ENCODE measurements at regions of chr11 and their contacts with region 1.

Region 1: DNA sequence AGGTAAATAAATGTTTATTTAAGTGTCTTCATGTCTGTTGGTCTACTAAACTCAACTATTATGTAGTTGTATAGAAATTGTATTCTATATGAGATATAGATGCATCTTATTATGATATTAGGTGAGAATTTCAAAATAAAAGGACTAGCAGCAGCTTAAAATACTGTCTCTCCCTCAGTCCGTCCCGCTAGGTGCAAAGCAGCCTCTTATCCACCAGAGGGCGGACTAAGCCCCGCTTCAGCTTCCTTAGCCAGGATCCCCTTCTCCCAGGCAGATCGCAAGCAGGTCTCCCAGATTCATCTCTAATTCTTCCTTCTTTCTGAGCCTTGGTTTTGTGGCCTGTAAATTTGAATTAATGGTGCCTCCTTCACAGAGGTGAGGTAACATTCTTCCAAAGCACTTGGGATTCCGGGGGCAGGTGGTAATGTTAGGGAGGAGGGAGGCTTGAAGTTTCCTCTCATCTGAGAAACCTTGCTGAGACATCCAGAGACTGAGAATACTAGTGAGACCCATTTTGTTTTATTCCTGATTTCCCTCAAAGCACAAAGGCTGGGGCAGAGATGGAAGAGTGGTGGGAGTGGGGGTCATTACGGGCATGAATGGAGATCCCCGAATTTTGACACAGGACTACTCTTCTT is 13.5 kb upstream of the INSC start:
- DNase-seq: peak; percentile 73
- H3K4me3 ChIP-seq: no peak overlapping the region
- H3K27ac ChIP-seq: no peak overlapping the region
- H3K4me1 ChIP-seq: no peaks in the 10 kb centered on the region; a peak in 1 of 4 replicates
- H3K27me3 ChIP-seq: no peaks in the 10 kb centered on the region
- CTCF ChIP-seq: peak; percentile 95
- EP300 ChIP-seq: no peak
- RAD21 ChIP-seq: peak; percentile 90

Region 2: GRCh38 chr11:15113381-15113780 is 12.2 kb after region 1 on chr11:
- CTCF ChIA-PET with region 1: interaction called, 67 read pairs
- POLR2A ChIA-PET with region 1: no interaction called
- DNase-seq: no peak
- H3K4me3 ChIP-seq: no peak overlapping the region
- H3K27ac ChIP-seq: no peak overlapping the region
- H3K4me1 ChIP-seq: peaks cover 0 to 7% of the 10 kb centered on the region in 2 experiments; a peak in 1 of 4 replicates
- H3K27me3 ChIP-seq: no peaks in the 10 kb centered on the region; the same call in 1 of the 2 replicates
- CTCF ChIP-seq: no peak
- EP300 ChIP-seq: no peak
- RAD21 ChIP-seq: no peak

Region 3: GRCh38 chr11:15123849-15124248 is 22.7 kb after region 1 on chr11:
- CTCF ChIA-PET with region 1: interaction called, 22 read pairs
- POLR2A ChIA-PET with region 1: no interaction called
- DNase-seq: no peak
- H3K4me3 ChIP-seq: no peak overlapping the region
- H3K27ac ChIP-seq: no peak overlapping the region
- H3K4me1 ChIP-seq: no peaks in the 10 kb centered on the region; a peak in 1 of 4 replicates
- H3K27me3 ChIP-seq: no peaks in the 10 kb centered on the region
- CTCF ChIP-seq: no peak
- EP300 ChIP-seq: no peak
- RAD21 ChIP-seq: no peak

Region 4: GRCh38 chr11:15195454-15196200 is 94.4 kb after region 1 on chr11:
- CTCF ChIA-PET with region 1: interaction called, 282 read pairs
- POLR2A ChIA-PET with region 1: no interaction called
- DNase-seq: no peak
- H3K4me3 ChIP-seq: no peak overlapping the region
- H3K27ac ChIP-seq: no peak overlapping the region
- H3K4me1 ChIP-seq: no peaks in the 10 kb centered on the region; a peak in 1 of 4 replicates
- H3K27me3 ChIP-seq: no peaks in the 10 kb centered on the region
- CTCF ChIP-seq: no peak
- EP300 ChIP-seq: no peak
- RAD21 ChIP-seq: no peak

Region 5: DNA sequence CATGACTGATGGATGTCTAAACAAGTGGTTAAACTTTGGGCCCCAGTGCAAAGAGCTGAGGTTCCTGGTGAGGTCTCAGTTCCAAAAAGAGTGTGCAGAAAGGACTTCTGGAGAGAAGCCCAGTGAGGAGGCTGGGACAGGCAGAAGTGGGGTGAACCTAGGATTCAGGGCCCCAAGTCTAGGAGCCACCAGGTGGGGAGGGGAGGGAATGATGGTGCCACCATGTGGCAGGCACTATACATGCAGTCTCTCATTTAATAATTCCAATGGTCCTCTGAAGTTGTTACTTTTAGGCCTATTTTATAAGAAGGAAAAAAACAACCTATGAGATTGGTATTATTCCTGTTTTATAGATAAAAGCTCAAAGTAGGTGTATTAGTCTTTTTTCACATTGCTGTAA is 115.5 kb after region 1 on chr11:
- CTCF ChIA-PET with region 1: interaction called, 282 read pairs
- POLR2A ChIA-PET with region 1: no interaction called
- DNase-seq: no peak
- H3K4me3 ChIP-seq: no peak overlapping the region
- H3K27ac ChIP-seq: no peak overlapping the region
- H3K4me1 ChIP-seq: peaks cover 0 to 24% of the 10 kb centered on the region in 2 experiments; a peak in 1 of 4 replicates
- H3K27me3 ChIP-seq: no peaks in the 10 kb centered on the region
- CTCF ChIP-seq: peak; percentile 49
- EP300 ChIP-seq: no peak
- RAD21 ChIP-seq: no peak

Measured in SK-N-SH (cell line).